CD14-positive monocyte (primary cell): ENCODE measurements at regions of chr12 and their contacts with region 1.

Region 1: DNA sequence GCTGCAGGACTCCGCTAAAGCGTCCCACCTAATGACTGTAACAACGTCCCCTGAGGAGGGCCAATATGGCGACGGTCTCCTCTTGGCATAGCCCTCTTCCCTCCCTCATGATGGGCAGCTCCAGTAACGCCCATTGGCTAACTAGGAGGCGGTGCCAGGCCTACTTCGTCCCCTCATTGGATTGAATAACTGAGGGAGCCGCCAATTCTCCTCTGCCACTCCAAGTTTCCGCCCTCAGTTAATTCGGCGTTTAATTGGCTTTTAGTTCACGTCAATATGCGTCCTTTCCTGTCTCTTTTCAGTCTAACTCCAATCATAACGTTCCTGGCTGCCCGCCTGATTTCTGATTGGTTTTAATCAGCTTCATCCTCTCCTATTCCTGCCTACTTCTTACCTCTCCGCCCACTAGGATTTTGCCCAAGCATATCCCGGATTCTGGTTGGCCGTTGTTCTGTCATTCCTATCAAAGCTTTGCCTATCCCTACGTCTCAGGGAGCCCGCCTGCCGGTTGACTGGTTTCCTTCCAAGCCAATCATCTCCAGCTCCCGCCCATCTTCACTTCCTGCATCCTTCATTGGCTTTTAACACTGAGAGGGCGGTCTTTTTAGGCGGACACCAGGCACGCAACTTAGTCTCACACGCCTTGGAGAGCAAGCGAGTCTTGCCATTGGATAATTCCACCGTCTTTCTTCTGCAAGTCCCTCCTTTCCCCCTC is 430 bp upstream of the SP1 start:
- DNase-seq: peak; percentile 100
- H3K4me3 ChIP-seq: peak overlapping the region; percentile 61 to 82 (median 82)
- H3K4me3 Mint-ChIP-seq: no peak overlapping the region
- H3K27ac ChIP-seq: peak overlapping the region; percentile 77 to 91
- H3K27ac Mint-ChIP-seq: no peak overlapping the region
- H3K4me1 ChIP-seq: peaks cover 44 to 50% of the 10 kb centered on the region in 2 donors
- H3K4me1 Mint-ChIP-seq: peaks cover 35% of the 10 kb centered on the region
- H3K27me3 ChIP-seq: no peaks in the 10 kb centered on the region
- H3K27me3 Mint-ChIP-seq: peaks cover 0 to 2% (median 1%) of the 10 kb centered on the region in 3 donors
- CTCF ChIP-seq: no peak

Region 2: DNA sequence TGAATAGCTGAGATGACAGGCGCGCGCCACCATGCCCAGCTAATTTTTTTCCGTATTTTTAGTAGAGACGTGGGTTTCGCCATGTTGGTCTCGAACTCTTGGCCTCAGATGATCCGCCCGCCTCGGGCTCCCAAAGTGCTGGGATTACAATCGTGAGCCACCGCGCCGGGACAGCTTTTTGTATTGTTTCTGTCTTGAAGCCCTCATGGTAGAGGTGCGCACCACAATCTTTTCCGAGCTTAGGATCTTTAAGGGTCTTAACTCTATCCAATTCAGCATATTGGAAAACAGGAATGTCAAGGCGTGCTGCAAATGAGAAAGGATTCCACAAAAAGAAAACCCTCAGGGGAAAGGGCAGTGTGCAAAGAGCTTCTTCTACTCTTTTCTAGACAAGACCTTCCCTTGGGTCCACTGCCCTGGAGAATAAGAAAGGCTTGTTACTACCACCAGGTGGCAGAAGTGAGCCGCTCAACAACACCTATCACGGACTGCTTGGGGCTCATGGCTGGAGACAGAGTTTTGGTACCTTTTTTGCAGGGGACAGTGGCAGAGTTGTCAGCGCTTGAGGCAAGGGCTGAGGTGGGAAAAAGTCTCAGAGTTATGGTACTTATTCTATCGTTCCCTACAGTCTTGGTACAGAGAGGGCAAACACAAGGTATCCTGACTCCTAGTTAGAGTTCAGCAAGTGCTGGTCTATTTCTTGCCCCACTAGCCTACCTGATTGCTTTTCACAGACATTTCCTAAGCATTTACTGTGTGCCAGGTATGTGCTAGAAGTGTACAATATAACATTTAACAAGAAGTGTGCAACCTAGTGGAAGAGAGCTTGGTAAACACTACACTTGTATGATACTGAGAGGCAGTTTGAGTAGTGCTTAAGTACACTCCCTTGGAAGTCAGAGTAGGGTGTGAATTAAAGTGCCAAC is 27.0 kb before region 1 on chr12:
- intact Hi-C with region 1: loop called (anchors 1 to 2 kb)
- DNase-seq: peak; percentile 80 to 85 (median 85)
- H3K4me3 ChIP-seq: no peak overlapping the region
- H3K4me3 Mint-ChIP-seq: no peak overlapping the region
- H3K27ac ChIP-seq: no peak overlapping the region
- H3K27ac Mint-ChIP-seq: peak overlapping the region in 2 of 7 donors; percentile 70 to 72
- H3K4me1 ChIP-seq: peaks cover 5 to 9% of the 10 kb centered on the region in 2 donors
- H3K4me1 Mint-ChIP-seq: peaks cover 14% of the 10 kb centered on the region
- H3K27me3 ChIP-seq: no peaks in the 10 kb centered on the region
- H3K27me3 Mint-ChIP-seq: peaks cover 0 to 1% (median 0%) of the 10 kb centered on the region in 3 donors
- CTCF ChIP-seq: peak; percentile 79

Region 3: DNA sequence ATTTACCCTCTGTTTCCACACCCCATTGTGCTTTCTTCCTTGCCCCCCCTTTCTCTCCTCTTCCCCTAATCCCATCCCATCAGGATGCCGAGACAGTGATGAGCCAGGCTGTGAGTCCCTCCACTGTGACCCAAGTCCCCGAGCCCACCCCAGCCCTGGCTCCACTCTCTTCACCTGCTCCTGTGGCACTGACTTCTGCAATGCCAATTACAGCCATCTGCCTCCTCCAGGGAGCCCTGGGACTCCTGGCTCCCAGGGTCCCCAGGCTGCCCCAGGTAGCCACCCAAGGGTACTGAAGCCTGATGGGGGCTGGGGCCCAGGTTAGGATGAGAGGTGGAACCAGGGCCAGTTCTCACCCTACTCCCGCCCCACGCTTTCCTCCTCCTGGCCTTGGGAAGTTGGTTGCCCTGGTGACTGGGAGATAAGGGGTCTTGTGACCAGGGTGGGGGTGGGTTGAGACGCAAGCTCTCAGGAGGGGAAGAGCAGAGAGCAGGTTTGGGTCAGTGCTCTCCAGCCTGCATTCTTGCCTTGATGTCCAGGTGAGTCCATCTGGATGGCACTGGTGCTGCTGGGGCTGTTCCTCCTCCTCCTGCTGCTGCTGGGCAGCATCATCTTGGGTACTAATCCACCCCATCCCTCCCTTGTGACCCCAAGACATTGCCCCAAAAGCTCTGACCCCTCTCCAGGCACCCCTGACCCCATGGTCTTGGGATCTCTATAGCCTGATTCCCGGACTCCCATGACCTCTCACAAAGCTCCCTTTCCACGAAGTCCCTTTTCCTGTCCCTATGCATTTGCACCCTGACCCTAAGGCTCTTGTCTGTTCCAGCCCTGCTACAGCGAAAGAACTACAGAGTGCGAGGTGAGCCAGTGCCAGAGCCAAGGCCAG is 45.3 kb after region 1 on chr12:
- intact Hi-C with region 1: loop called (anchors 5 kb)
- DNase-seq: no peak
- H3K4me3 ChIP-seq: no peak overlapping the region
- H3K4me3 Mint-ChIP-seq: no peak overlapping the region
- H3K27ac ChIP-seq: no peak overlapping the region
- H3K27ac Mint-ChIP-seq: peak overlapping the region in 1 of 7 donors; percentile 27
- H3K4me1 ChIP-seq: peaks cover 4 to 5% of the 10 kb centered on the region in 2 donors
- H3K4me1 Mint-ChIP-seq: peaks cover 6% of the 10 kb centered on the region
- H3K27me3 ChIP-seq: no peaks in the 10 kb centered on the region
- H3K27me3 Mint-ChIP-seq: peaks cover 3 to 6% (median 4%) of the 10 kb centered on the region in 3 donors
- CTCF ChIP-seq: no peak

Region 4: GRCh38 chr12:53451661-53452158 is 72.2 kb after region 1 on chr12 and contains the start of gene PCBP2:
- intact Hi-C with region 1: loop called in 1 of 2 experiments (anchors 5 kb)
- DNase-seq: peak; percentile 98 to 99 (median 98)
- H3K4me3 ChIP-seq: peak within 1 kb of the TSS; percentile 80 to 95 (median 87)
- H3K4me3 Mint-ChIP-seq: peak within 1 kb of the TSS; percentile 94 to 99
- H3K27ac ChIP-seq: peak within 1 kb of the TSS; percentile 85 to 91
- H3K27ac Mint-ChIP-seq: peak within 1 kb of the TSS; percentile 96 to 99 (median 99)
- H3K4me1 ChIP-seq: peaks cover 12 to 17% of the 10 kb centered on the region in 2 donors
- H3K4me1 Mint-ChIP-seq: peaks cover 19% of the 10 kb centered on the region
- H3K27me3 ChIP-seq: no peaks in the 10 kb centered on the region
- H3K27me3 Mint-ChIP-seq: peaks cover 0 to 4% (median 0%) of the 10 kb centered on the region in 3 donors
- CTCF ChIP-seq: peak; percentile 81
- polyA plus RNA-seq, gene PCBP2: 79.6 to 588 (median 81.9) TPM

Region 5: DNA sequence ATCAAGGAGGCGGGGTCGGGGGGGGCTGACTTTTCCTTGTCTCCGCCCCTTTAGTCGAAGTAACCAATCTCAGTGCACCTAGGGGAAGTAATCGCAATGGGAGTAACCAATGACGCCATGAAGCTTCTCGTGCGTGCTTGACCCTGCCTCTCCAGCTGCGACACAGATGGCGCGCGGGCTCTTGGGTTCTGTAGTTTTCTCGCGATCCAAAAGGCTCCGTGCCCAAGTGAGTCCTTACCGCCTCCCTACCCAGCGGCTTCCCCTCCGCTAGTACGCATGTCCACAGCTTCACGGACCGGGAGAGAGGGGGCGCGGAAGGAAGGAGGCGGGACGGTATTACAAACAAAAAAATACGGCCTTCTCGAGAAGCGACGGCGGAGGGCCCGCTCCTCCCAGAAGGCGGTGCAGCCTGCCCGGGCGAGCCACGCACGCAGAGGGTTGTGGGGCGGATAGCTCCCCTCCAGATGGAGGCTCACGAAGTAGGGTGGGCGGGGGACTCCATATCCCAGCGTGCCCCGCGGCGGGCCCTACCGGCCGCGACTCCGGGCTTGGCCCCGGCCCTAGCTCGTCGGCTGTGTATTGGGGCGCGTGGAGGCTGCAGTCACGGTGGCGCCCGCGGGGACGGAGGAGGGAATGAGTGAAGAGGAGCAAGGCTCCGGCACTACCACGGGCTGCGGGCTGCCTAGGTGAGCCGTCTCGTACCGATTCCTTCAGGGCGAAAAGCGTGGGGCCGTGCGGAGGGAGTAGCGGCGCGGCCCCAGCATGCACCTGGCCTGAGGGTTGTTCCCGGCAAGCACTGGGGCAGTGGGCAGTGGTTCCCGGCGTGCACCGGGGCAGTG is 121.4 kb after region 1 on chr12 and contains the start of gene TARBP2:
- intact Hi-C with region 1: loop called in 1 of 2 experiments (anchors 1 kb)
- DNase-seq: peak; percentile 99
- H3K4me3 ChIP-seq: peak within 1 kb of the TSS; percentile 74 to 83 (median 81)
- H3K4me3 Mint-ChIP-seq: peak within 1 kb of the TSS; percentile 88 to 100
- H3K27ac ChIP-seq: peak within 1 kb of the TSS; percentile 99
- H3K27ac Mint-ChIP-seq: peak within 1 kb of the TSS; percentile 97 to 99 (median 99)
- H3K4me1 ChIP-seq: peaks cover 42 to 46% of the 10 kb centered on the region in 2 donors
- H3K4me1 Mint-ChIP-seq: peaks cover 47% of the 10 kb centered on the region
- H3K27me3 ChIP-seq: no peaks in the 10 kb centered on the region
- H3K27me3 Mint-ChIP-seq: peaks cover 0 to 6% (median 0%) of the 10 kb centered on the region in 3 donors
- CTCF ChIP-seq: no peak
- polyA plus RNA-seq, gene TARBP2: 16.6 to 39.4 (median 24.4) TPM